GM10248 (cell line): ENCODE measurements at regions of chr1 and their contacts with region 1.

Region 1: GRCh38 chr1:11681071-11681771 is at the start of gene MAD2L2:
- DNase-seq: peak; percentile 97
- CTCF ChIP-seq: no peak

Region 2: DNA sequence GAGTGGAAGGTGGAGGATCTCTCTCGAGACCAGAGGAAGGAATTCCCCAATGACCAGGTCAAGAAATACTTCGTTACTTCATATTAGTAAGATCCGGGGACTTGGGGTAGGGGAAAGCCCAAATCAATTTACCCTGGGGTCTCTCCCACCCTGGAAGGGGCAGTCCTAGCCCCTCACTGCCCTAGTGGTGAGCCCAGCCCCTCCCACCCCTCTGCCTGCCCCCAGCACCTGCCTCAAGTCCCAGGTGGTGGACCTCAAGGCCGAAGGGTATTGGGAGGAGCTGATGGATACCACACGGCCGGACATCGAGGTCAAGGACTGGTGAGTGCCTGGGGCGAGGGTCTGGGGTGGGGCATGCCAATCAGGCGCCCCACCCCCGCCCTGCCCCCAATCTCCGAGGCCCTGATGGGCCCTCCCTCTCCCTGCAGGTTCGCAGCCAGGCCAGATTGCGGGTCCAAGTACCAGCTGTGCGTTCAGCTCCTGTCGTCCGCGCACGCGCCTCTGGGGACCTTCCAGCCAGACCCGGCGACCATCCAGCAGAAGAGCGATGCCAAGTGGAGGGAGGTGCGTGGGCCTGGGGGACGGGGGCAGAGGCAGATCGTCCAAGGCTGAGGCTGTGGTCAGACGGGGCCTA is 22.8 kb before region 1 on chr1:
- CTCF ChIA-PET with region 1: interaction called, 21 read pairs
- POLR2A ChIA-PET with region 1: no interaction called
- DNase-seq: no peak
- CTCF ChIP-seq: no peak

Region 3: DNA sequence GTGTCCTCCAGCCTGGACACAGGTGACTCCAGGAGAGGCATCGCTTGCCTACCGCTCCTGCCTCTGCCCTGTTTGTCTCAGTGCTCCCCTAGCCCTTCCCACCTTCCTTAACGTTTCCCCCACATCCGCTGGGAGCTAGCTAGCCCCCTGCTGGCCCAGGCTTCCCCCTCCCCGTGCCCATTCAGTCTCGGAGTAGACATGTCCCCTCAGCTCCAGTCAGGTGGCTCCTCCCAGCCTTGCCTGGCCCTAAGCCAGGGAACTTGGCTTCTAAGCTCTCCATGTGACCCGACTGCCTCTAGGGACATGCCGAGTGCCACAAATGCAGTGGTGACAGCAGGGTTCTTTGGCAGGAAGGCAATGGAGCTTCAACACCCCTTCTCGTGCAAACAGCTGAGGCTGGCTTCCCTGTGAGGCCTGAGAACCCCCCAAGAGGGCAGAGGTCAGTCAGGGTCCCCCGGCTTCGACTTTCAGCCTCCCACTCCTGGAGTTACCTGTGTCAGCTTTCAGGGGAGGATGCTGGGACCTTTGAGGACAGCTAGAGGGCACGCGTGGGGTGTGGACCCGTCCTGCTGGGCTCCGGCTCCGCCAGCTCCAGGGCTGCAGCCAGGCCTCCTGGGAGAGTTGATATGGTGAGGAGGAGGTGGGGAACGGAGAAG is 26.5 kb after region 1 on chr1:
- CTCF ChIA-PET with region 1: no interaction called
- POLR2A ChIA-PET with region 1: no interaction called
- DNase-seq: no peak
- CTCF ChIP-seq: no peak

Region 4: GRCh38 chr1:12019858-12020509 is 338.8 kb after region 1 on chr1:
- CTCF ChIA-PET with region 1: no interaction called
- POLR2A ChIA-PET with region 1: no interaction called
- DNase-seq: no peak
- CTCF ChIP-seq: no peak